ENCODE measurements at regions of chr14 and their contacts with region 1.

Region 1: DNA sequence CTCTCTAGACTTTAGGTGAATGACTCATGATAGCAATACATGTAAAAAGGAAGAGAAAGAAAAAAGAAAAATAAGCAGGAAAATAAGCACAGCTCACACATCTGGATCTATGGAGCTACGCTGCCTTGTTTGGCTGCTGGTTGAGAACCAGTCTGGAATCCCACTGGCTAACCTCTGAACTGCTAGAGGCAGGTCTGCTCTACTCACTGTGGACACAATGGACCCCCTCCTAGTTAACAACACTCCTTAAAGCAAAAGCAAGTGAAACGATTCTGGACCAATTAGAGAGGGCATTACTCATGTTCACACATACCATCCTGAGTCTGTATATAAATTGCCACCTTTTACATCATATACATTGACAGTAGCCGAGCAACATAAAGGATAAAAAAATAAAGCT is 383.2 kb upstream of the FLRT2 start:
- DNase-seq: no peak
- ATAC-seq: no peak
- H3K4me3 ChIP-seq: no peak overlapping the region
- H3K4me3 Mint-ChIP-seq: no peak overlapping the region
- H3K27ac ChIP-seq: no peak overlapping the region
- H3K27ac Mint-ChIP-seq: no peak overlapping the region
- H3K4me1 ChIP-seq: no peaks in the 10 kb centered on the region
- H3K4me1 Mint-ChIP-seq: no peaks in the 10 kb centered on the region
- H3K27me3 ChIP-seq: no peaks in the 10 kb centered on the region
- H3K27me3 Mint-ChIP-seq: no peaks in the 10 kb centered on the region

Region 2: GRCh38 chr14:86027144-86027543 is 880.4 kb after region 1 on chr14:
- CTCF ChIA-PET with region 1: no interaction called
- POLR2A ChIA-PET with region 1: interaction called in 1 of 2 experiments, 16 read pairs
- DNase-seq: no peak
- ATAC-seq: no peak
- H3K4me3 ChIP-seq: no peak overlapping the region
- H3K4me3 Mint-ChIP-seq: no peak overlapping the region
- H3K27ac ChIP-seq: no peak overlapping the region
- H3K27ac Mint-ChIP-seq: no peak overlapping the region
- H3K4me1 ChIP-seq: no peaks in the 10 kb centered on the region
- H3K4me1 Mint-ChIP-seq: peaks cover 17 to 23% (median 19%) of the 10 kb centered on the region in 3 donors
- H3K27me3 ChIP-seq: no peaks in the 10 kb centered on the region
- H3K27me3 Mint-ChIP-seq: no peaks in the 10 kb centered on the region